ENCODE measurements at regions of chr6 and their contacts with region 1.

Region 1: DNA sequence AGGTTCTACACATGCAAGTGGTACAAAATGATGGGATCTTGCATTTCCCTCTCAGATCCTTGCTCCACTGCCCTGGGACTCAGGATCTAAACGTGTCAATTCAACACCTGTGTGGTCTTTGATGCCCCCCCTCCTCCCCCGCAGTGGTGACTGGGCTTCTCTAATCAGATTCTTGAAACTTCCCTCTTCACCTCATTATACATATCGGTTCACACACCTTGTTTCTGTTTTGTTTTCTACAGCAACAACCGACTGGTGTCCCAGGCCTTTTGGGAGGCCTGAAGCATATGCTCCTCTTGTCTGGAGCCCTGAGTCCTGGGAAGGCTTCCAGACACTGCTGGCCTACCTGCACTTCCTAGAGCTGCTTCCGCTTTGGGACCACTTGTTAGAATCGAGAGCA is 20.0 kb downstream of the SAMD3 start:
- DNase-seq: no peak
- ATAC-seq: peak; percentile 83
- H3K4me3 ChIP-seq: no peak overlapping the region
- H3K27ac ChIP-seq: 0 out of 2 replicates have a peak overlapping the region, but pooled peaks have one; percentile 2
- H3K4me1 ChIP-seq: peaks cover 10% of the 10 kb centered on the region
- H3K27me3 ChIP-seq: no peaks in the 10 kb centered on the region
- CTCF ChIP-seq: no peak
- EP300 ChIP-seq: no peak
- POLR2A ChIP-seq: no peak
- RAD21 ChIP-seq: no peak

Region 2: DNA sequence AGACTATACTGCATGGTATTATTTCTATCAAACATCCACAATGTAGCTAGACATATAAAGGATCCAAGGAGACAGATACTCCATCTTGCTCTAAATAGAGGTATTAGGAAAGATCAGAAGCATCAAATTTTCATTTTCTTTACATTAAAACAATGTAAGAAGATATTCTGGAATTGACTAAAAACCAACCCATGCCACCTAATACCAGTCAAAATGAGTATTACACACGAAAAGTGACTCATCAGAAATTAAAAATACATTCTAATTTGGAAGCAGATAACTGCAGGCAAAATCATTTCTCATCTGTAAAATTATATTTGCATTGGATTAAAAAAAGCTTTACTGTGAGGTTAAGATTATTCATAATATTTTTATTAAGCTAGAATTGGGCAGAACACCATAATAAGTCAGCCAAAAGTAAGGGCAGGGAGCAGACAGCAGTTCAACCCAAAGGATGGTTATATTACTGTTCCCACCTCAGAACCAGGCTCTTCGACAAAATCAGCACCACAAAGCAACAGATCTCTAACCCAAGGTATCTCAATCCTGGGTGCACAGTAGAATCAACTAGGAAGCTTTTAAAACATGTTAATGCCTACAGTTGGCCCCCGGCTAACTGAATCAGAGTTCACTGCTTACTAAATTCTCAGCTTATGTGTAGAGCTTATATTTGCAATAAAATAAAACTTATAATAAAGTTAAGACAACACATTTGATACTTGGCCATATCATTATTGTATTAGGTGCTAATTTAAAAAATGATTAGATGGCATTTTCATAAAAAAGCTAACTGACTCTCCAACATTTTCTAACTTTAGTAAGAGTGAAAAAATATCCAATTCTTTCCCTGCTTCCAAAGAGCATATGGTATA is 15.2 kb before region 1 on chr6:
- CTCF ChIA-PET with region 1: interaction called, 3 read pairs
- POLR2A ChIA-PET with region 1: interaction called, 3 read pairs
- RAD21 ChIA-PET with region 1: no interaction called
- SMC1A ChIA-PET with region 1: interaction called, 10 read pairs
- in situ Hi-C with region 1: no loop called
- intact Hi-C with region 1: no loop called
- DNase-seq: no peak
- ATAC-seq: no peak
- H3K4me3 ChIP-seq: no peak overlapping the region
- H3K27ac ChIP-seq: no peak overlapping the region
- H3K4me1 ChIP-seq: no peaks in the 10 kb centered on the region
- H3K27me3 ChIP-seq: no peaks in the 10 kb centered on the region; a peak in 1 of 4 replicates
- CTCF ChIP-seq: no peak
- EP300 ChIP-seq: no peak
- POLR2A ChIP-seq: no peak
- RAD21 ChIP-seq: no peak